ENCODE measurements at regions of chr5 and their contacts with region 1.

Region 1: GRCh38 chr5:33997331-33997983 is 10.4 kb downstream of the AMACR start:
- DNase-seq: no peak
- ATAC-seq: peak; percentile 69

Region 2: GRCh38 chr5:34464830-34465229 is 467.4 kb after region 1 on chr5:
- intact Hi-C with region 1: loop called (anchors 5 kb)
- DNase-seq: no peak
- ATAC-seq: no peak

Measured in Right ventricle myocardium inferior (tissue), 1 donor.